ENCODE measurements at regions of chr1 and their contacts with region 1.

Region 1: GRCh38 chr1:154386643-154387352 is 18.3 kb upstream of the IL6R start:
- DNase-seq: peak; percentile 92
- H3K4me3 Mint-ChIP-seq: peak overlapping the region; percentile 69
- H3K27ac Mint-ChIP-seq: peak overlapping the region; percentile 95
- H3K4me1 Mint-ChIP-seq: peaks cover 36% of the 10 kb centered on the region
- H3K27me3 Mint-ChIP-seq: no peaks in the 10 kb centered on the region

Region 2: GRCh38 chr1:154186177-154186576 is 200.6 kb before region 1 on chr1:
- CTCF ChIA-PET with region 1: no interaction called
- POLR2A ChIA-PET with region 1: no interaction called
- intact Hi-C with region 1: no loop called
- DNase-seq: peak; percentile 86
- H3K4me3 Mint-ChIP-seq: no peak overlapping the region
- H3K27ac Mint-ChIP-seq: no peak overlapping the region
- H3K4me1 Mint-ChIP-seq: peaks cover 10% of the 10 kb centered on the region
- H3K27me3 Mint-ChIP-seq: no peaks in the 10 kb centered on the region

Region 3: GRCh38 chr1:154352581-154353459 is 34.0 kb before region 1 on chr1:
- CTCF ChIA-PET with region 1: interaction called, 10 read pairs
- POLR2A ChIA-PET with region 1: no interaction called
- intact Hi-C with region 1: loop called (anchors 1 kb)
- DNase-seq: peak; percentile 81
- H3K4me3 Mint-ChIP-seq: peak overlapping the region; percentile 72
- H3K27ac Mint-ChIP-seq: peak overlapping the region; percentile 82
- H3K4me1 Mint-ChIP-seq: peaks cover 41% of the 10 kb centered on the region
- H3K27me3 Mint-ChIP-seq: no peaks in the 10 kb centered on the region

Region 4: DNA sequence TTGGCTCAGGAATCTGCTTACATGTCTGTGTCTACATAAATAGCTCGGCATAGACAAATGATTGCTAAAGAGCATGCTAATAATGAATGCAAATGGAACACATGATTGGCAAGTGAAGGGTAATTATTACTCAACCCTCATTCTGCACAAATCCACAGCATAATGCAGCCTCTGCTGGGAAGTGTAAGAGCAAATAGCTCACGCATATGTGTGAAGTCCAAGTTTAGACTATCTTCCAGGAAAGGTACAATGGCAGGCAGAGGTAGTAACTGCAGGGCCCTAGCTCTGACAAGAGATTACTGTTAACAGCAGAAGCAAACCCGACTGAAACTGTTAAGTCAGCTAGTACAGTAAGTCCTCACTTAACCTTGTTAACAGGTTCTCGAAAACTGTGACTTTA is 11.3 kb after region 1 on chr1:
- CTCF ChIA-PET with region 1: interaction called, 3 read pairs
- POLR2A ChIA-PET with region 1: interaction called, 19 read pairs
- intact Hi-C with region 1: loop called (anchors 1 kb)
- DNase-seq: no peak
- H3K4me3 Mint-ChIP-seq: peak overlapping the region; percentile 51
- H3K27ac Mint-ChIP-seq: peak overlapping the region; percentile 74
- H3K4me1 Mint-ChIP-seq: peaks cover 44% of the 10 kb centered on the region
- H3K27me3 Mint-ChIP-seq: no peaks in the 10 kb centered on the region

Region 5: GRCh38 chr1:154553056-154554030 is 166.5 kb after region 1 on chr1:
- CTCF ChIA-PET with region 1: no interaction called
- POLR2A ChIA-PET with region 1: no interaction called
- intact Hi-C with region 1: no loop called
- DNase-seq: no peak
- H3K4me3 Mint-ChIP-seq: no peak overlapping the region
- H3K27ac Mint-ChIP-seq: no peak overlapping the region
- H3K4me1 Mint-ChIP-seq: peaks cover 39% of the 10 kb centered on the region
- H3K27me3 Mint-ChIP-seq: no peaks in the 10 kb centered on the region